CD4-positive, alpha-beta T cell (primary cell): ENCODE measurements at regions of chr2 and their contacts with region 1.

Region 1: GRCh38 chr2:98412751-98413458 is 31.8 kb upstream of the INPP4A start:
- DNase-seq: peak in 13 of 14 experiments; percentile 5 to 88 (median 41)
- ATAC-seq: peak; percentile 92
- H3K4me3 ChIP-seq: no peak overlapping the region
- H3K4me3 Mint-ChIP-seq: no peak overlapping the region
- H3K27ac ChIP-seq: no peak overlapping the region
- H3K27ac Mint-ChIP-seq: no peak overlapping the region
- H3K4me1 ChIP-seq: peaks cover 9% of the 10 kb centered on the region
- H3K4me1 Mint-ChIP-seq: peaks cover 6% of the 10 kb centered on the region
- H3K27me3 ChIP-seq: no peaks in the 10 kb centered on the region
- H3K27me3 Mint-ChIP-seq: no peaks in the 10 kb centered on the region
- CTCF ChIP-seq: peak; percentile 82

Region 2: GRCh38 chr2:98487806-98488651 is 75.1 kb after region 1 on chr2:
- CTCF ChIA-PET with region 1: interaction called, 6 read pairs
- POLR2A ChIA-PET with region 1: no interaction called
- intact Hi-C with region 1: loop called in 1 of 2 experiments (anchors 2 kb)
- DNase-seq: peak in 12 of 14 experiments; percentile 37 to 80 (median 50)
- ATAC-seq: peak; percentile 86
- H3K4me3 ChIP-seq: no peak overlapping the region
- H3K4me3 Mint-ChIP-seq: peak overlapping the region; percentile 54
- H3K27ac ChIP-seq: no peak overlapping the region
- H3K27ac Mint-ChIP-seq: peak overlapping the region; percentile 57
- H3K4me1 ChIP-seq: peaks cover 79% of the 10 kb centered on the region
- H3K4me1 Mint-ChIP-seq: peaks cover 100% of the 10 kb centered on the region
- H3K27me3 ChIP-seq: no peaks in the 10 kb centered on the region
- H3K27me3 Mint-ChIP-seq: no peaks in the 10 kb centered on the region
- CTCF ChIP-seq: peak; percentile 66

Region 3: GRCh38 chr2:98568881-98569793 is 156.2 kb after region 1 on chr2:
- CTCF ChIA-PET with region 1: no interaction called
- POLR2A ChIA-PET with region 1: no interaction called
- intact Hi-C with region 1: loop called in 1 of 2 experiments (anchors 5 kb)
- DNase-seq: peak; percentile 55 to 83 (median 68)
- ATAC-seq: peak; percentile 92
- H3K4me3 ChIP-seq: no peak overlapping the region
- H3K4me3 Mint-ChIP-seq: no peak overlapping the region
- H3K27ac ChIP-seq: no peak overlapping the region
- H3K27ac Mint-ChIP-seq: peak overlapping the region; percentile 36
- H3K4me1 ChIP-seq: no peaks in the 10 kb centered on the region
- H3K4me1 Mint-ChIP-seq: no peaks in the 10 kb centered on the region
- H3K27me3 ChIP-seq: no peaks in the 10 kb centered on the region
- H3K27me3 Mint-ChIP-seq: no peaks in the 10 kb centered on the region
- CTCF ChIP-seq: peak; percentile 93

Region 4: DNA sequence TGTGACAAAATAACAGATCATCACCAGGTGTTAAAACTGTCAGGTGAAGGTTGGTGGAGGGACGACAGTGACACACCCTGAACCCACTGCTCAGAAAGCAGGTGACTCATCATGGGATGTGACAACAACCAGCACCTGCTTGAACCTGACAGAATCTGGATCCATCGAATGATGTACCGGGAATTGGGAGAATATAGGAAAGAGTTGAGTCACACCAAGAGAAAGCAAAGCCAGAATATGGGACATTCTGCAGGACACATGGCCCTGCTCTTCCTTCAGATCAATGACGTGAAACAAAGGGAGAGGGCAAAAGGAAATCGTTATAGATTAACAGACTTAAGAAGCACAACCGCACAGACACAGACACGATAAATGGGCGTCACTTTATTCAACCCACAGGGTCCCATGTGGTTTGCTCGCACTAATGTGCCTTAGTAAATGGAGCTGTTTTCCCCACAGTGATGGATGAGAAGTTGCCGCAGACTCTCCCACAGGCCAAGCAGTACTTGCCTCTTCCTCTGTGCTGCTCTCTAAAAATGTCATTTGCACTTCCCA is 423.0 kb after region 1 on chr2:
- CTCF ChIA-PET with region 1: no interaction called
- POLR2A ChIA-PET with region 1: no interaction called
- intact Hi-C with region 1: loop called (anchors 1 to 10 kb)
- DNase-seq: peak; percentile 36 to 88 (median 51)
- ATAC-seq: peak; percentile 85
- H3K4me3 ChIP-seq: no peak overlapping the region
- H3K4me3 Mint-ChIP-seq: peak overlapping the region; percentile 57
- H3K27ac ChIP-seq: peak overlapping the region; percentile 27 to 48
- H3K27ac Mint-ChIP-seq: peak overlapping the region; percentile 94
- H3K4me1 ChIP-seq: peaks cover 42% of the 10 kb centered on the region
- H3K4me1 Mint-ChIP-seq: peaks cover 46% of the 10 kb centered on the region
- H3K27me3 ChIP-seq: no peaks in the 10 kb centered on the region
- H3K27me3 Mint-ChIP-seq: no peaks in the 10 kb centered on the region
- CTCF ChIP-seq: no peak